ENCODE measurements at regions of chr6 and their contacts with region 1.

Region 1: GRCh38 chr6:33744001-33744848 is 2.5 kb downstream of the IP6K3 start:
- DNase-seq: peak in 4 of 5 donors; percentile 89 to 92 (median 90)
- H3K4me3 ChIP-seq: peak overlapping the region in 1 of 3 donors; percentile 79
- H3K27ac ChIP-seq: peak overlapping the region in 1 of 2 donors; percentile 79
- H3K4me1 ChIP-seq: peaks cover 4 to 18% (median 13%) of the 10 kb centered on the region in 3 donors
- H3K27me3 ChIP-seq: no peaks in the 10 kb centered on the region
- CTCF ChIP-seq: peak; percentile 89

Region 2: DNA sequence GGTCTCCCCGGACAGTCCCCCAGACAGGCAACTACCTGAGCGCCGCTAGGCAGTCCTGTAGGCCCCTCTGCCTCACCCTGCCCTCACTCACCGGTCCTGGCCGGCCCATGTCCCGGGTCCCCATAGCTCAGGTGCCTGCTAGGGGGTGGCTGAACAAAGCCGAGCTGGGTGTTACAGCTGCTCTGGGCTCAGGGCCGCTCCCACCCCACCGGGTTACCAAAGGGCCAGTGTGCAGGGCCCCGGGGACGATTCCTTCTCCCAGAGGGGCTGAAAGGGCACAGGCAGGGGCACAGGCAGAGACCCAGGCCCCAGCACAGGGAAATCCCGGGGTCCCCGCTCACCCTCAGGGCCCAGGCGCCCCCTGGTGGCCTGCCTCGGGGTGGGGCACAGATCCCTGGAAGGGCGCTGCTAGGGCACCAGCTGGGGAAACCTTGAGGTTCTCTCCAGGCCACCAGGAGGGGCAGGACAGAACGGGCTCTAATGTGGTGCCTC is 283.3 kb after region 1 on chr6:
- intact Hi-C with region 1: loop called (anchors 10 kb)
- DNase-seq: peak in 3 of 5 donors; percentile 57 to 78 (median 69)
- H3K4me3 ChIP-seq: no peak overlapping the region
- H3K27ac ChIP-seq: no peak overlapping the region
- H3K4me1 ChIP-seq: no peaks in the 10 kb centered on the region
- H3K27me3 ChIP-seq: no peaks in the 10 kb centered on the region
- CTCF ChIP-seq: peak; percentile 64